Dorsolateral prefrontal cortex (tissue), 120 donors: ENCODE measurements at regions of chr10 and their contacts with region 1.

Region 1: DNA sequence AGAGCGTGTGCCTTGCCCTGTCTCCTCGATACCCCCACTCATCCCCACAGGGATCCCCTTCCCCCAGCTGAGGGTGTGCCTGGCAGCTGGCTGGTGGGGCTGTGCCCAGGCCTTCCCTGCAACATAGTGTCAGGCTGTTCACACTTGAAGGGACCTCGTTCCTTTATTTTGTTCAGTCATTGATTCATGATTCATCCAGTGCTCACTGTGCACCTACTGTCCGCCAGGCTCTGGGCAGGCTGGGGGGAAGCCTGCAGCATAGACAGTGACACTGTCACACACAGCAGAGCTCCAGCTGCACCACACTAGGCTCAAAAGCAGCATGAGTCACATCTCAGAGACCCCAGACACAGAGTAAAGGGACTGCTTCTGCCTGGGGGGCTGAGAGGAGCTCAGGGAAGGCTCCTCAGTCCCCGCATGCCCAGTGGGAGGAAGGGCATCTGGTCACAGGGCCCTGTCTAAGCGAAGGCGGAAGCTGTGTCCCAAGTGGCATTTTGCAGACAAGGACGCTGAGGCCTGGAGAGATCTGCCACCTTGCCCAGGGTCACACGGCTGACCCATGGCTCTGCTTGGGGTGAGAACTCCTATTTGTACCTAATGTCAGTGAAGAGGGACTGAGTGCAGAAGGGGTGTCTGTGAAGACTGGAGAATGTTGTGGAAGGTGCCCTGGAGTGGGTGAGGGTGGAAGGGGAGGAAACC is 27.9 kb downstream of the CDH23 start:
- DNase-seq: peak in 1 of 10 donors; percentile 29
- H3K4me3 ChIP-seq: no peak overlapping the region
- H3K27ac ChIP-seq: no peak overlapping the region
- H3K27me3 ChIP-seq: no peaks in the 10 kb centered on the region
- CTCF ChIP-seq: no peak

Region 2: GRCh38 chr10:71494980-71495381 is 70.3 kb after region 1 on chr10:
- intact Hi-C with region 1: loop called in 1 of 2 experiments (anchors 5 kb)
- DNase-seq: no peak
- H3K4me3 ChIP-seq: no peak overlapping the region
- H3K27ac ChIP-seq: no peak overlapping the region
- H3K27me3 ChIP-seq: no peaks in the 10 kb centered on the region
- CTCF ChIP-seq: no peak

Region 3: GRCh38 chr10:71638064-71638821 is 213.6 kb after region 1 on chr10:
- intact Hi-C with region 1: no loop called
- DNase-seq: no peak
- H3K4me3 ChIP-seq: no peak overlapping the region
- H3K27ac ChIP-seq: peak overlapping the region in 1 of 59 donors; percentile 32
- H3K27me3 ChIP-seq: no peaks in the 10 kb centered on the region
- CTCF ChIP-seq: no peak

Region 4: GRCh38 chr10:71893920-71894319 is 469.3 kb after region 1 on chr10:
- intact Hi-C with region 1: no loop called
- DNase-seq: no peak
- H3K4me3 ChIP-seq: no peak overlapping the region
- H3K27ac ChIP-seq: no peak overlapping the region
- H3K27me3 ChIP-seq: no peaks in the 10 kb centered on the region
- CTCF ChIP-seq: no peak